Mammary epithelial cell (primary cell): ENCODE measurements at regions of chr1 and their contacts with region 1.

Region 1: GRCh38 chr1:170664828-170665612 is 1.1 kb downstream of the PRRX1 start:
- DNase-seq: peak; percentile 20
- H3K4me3 ChIP-seq: peak overlapping the region; percentile 46 to 56 (median 53)
- H3K27ac ChIP-seq: no peak overlapping the region
- H3K4me1 ChIP-seq: peaks cover 9% of the 10 kb centered on the region
- H3K27me3 ChIP-seq: peaks cover 29% of the 10 kb centered on the region
- CTCF ChIP-seq: peak in 1 of 2 donors; percentile 44

Region 2: GRCh38 chr1:170010443-170010842 is 654.6 kb before region 1 on chr1:
- CTCF ChIA-PET with region 1: no interaction called
- dilution Hi-C with region 1: no loop called
- in situ Hi-C with region 1: no loop called
- intact Hi-C with region 1: loop called (anchors 10 kb)
- DNase-seq: no peak
- H3K4me3 ChIP-seq: no peak overlapping the region
- H3K27ac ChIP-seq: no peak overlapping the region
- H3K4me1 ChIP-seq: no peaks in the 10 kb centered on the region
- H3K27me3 ChIP-seq: no peaks in the 10 kb centered on the region
- CTCF ChIP-seq: peak; percentile 6 to 48

Region 3: GRCh38 chr1:170445096-170445495 is 219.9 kb before region 1 on chr1:
- CTCF ChIA-PET with region 1: no interaction called
- dilution Hi-C with region 1: no loop called
- in situ Hi-C with region 1: no loop called
- intact Hi-C with region 1: loop called (anchors 10 kb)
- DNase-seq: peak; percentile 59
- H3K4me3 ChIP-seq: no peak overlapping the region
- H3K27ac ChIP-seq: no peak overlapping the region
- H3K4me1 ChIP-seq: peaks cover 8% of the 10 kb centered on the region
- H3K27me3 ChIP-seq: peaks cover 4% of the 10 kb centered on the region
- CTCF ChIP-seq: no peak

Region 4: GRCh38 chr1:170619241-170620028 is 45.6 kb before region 1 on chr1:
- CTCF ChIA-PET with region 1: no interaction called
- dilution Hi-C with region 1: no loop called
- in situ Hi-C with region 1: no loop called
- intact Hi-C with region 1: loop called (anchors 5 kb)
- DNase-seq: peak; percentile 46
- H3K4me3 ChIP-seq: no peak overlapping the region
- H3K27ac ChIP-seq: no peak overlapping the region
- H3K4me1 ChIP-seq: peaks cover 20% of the 10 kb centered on the region
- H3K27me3 ChIP-seq: no peaks in the 10 kb centered on the region
- CTCF ChIP-seq: no peak